GM18951 (cell line): ENCODE measurements at regions of chr4 and their contacts with region 1.

Region 1: DNA sequence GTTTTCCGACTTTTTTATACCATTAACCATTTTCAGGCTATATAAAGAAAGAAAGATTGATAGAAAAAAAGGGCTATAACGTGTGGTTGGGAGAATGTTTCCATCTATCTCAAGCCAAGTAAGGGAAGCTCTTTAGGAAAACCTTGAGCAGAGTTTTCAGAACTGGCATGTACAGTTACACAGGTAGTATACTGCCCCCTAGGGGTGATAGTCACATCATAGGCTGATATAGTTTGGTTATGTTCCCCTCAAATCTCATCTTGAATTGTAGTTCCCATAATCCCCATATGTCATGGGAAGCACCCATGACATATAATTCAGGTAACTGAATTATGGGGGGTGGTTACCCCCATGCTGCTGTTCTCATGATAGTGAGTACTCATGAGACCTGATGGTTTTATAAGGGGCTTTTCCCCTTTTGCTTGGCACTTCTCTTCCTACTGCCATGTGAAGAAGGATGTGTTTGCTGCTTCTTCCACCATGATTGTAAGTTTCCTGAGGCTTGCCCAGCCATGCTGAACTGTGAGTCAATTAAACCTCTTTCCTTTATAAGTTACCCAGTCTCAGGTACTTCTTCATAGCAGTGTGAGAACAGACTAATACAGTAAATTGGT is 186.8 kb downstream of the TMA16 start:
- POLR2A ChIP-seq: no peak

Region 2: GRCh38 chr4:164731827-164732474 is 1050.6 kb after region 1 on chr4:
- in situ Hi-C with region 1: loop called (anchors 25 kb)
- POLR2A ChIP-seq: no peak